ENCODE measurements at regions of chr12 and their contacts with region 1.

Region 1: GRCh38 chr12:56189176-56189917 is at the start of gene SMARCC2:
- DNase-seq: peak; percentile 93 to 96 (median 94)
- ATAC-seq: peak; percentile 93
- H3K4me3 ChIP-seq: peak within 1 kb of the TSS; percentile 65
- H3K4me1 ChIP-seq: peaks cover 21% of the 10 kb centered on the region
- CTCF ChIP-seq: peak; percentile 83
- total RNA-seq, gene SMARCC2: 91.7 to 163 (median 116) TPM

Region 2: DNA sequence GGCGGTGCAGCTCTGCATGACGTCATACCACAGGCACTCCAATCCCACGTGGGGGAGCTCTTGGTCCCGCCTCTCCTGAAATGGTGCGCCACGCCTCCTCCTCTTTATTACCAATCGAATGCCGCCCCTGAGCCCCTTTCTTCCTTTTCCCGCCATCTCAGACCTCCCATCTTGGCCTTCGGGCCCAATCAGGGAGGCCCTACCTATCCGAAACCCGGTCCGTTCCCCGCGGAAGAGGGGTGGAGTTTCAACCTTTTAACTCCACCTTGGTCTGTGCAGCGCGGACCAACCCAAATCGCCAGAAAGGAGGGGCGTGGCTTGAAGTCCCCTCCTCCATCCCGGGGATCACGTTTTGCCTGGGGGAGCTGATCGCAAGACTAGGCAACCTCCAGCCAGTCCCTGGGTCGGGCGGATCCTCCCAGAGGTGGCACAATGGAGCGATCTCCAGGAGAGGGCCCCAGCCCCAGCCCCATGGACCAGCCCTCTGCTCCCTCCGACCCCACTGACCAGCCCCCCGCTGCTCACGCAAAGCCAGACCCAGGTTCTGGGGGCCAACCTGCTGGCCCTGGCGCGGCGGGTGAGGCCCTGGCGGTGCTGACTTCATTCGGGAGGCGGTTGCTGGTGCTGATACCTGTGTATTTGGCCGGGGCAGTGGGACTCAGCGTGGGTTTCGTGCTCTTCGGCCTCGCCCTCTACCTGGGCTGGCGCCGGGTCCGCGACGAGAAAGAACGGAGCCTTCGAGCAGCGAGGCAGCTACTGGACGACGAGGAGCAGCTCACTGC is 61.3 kb before region 1 on chr12 and contains the start of gene ESYT1:
- intact Hi-C with region 1: loop called in 1 of 2 experiments (anchors 10 kb)
- DNase-seq: peak; percentile 96 to 99 (median 98)
- ATAC-seq: peak; percentile 85
- H3K4me3 ChIP-seq: peak within 1 kb of the TSS; percentile 49
- H3K4me1 ChIP-seq: peaks cover 22% of the 10 kb centered on the region
- CTCF ChIP-seq: no peak
- total RNA-seq, gene ESYT1: 44.9 to 75.7 (median 52.0) TPM